ENCODE measurements at regions of chr14 and their contacts with region 1.

Region 1: GRCh38 chr14:58238252-58239243 is 6.1 kb upstream of the PSMA3 start:
- DNase-seq: peak in 1 of 2 donors; percentile 56
- H3K4me3 ChIP-seq: peak overlapping the region; percentile 52 to 64 (median 63)
- H3K27ac ChIP-seq: peak overlapping the region; percentile 87 to 92
- H3K4me1 ChIP-seq: no peaks in the 10 kb centered on the region
- H3K27me3 ChIP-seq: no peaks in the 10 kb centered on the region
- CTCF ChIP-seq: no peak
- POLR2A ChIP-seq: no peak

Region 2: GRCh38 chr14:57769863-57770523 is 468.6 kb before region 1 on chr14:
- intact Hi-C with region 1: no loop called
- DNase-seq: no peak
- H3K4me3 ChIP-seq: no peak overlapping the region
- H3K27ac ChIP-seq: no peak overlapping the region
- H3K4me1 ChIP-seq: no peaks in the 10 kb centered on the region
- H3K27me3 ChIP-seq: no peaks in the 10 kb centered on the region
- CTCF ChIP-seq: no peak
- POLR2A ChIP-seq: no peak

Region 3: DNA sequence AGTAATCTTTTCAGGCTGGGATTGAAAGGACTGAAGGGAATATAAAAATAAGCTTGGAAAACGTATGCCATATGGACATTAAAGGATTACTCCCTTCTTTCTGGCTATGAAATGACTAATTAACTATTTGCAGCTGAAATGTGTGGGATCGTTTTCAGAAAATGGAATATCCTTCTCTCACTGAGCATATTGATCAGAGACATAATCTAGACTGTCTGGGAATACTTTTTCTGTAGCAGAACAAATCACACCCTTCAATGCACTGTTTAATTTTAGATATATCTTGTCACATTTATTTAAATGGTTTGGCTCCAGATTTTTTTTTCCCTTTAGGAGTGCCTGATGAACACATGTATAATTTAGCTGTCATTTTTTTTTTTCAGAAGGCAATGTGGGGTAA is 49.4 kb before region 1 on chr14:
- intact Hi-C with region 1: no loop called
- DNase-seq: no peak
- H3K4me3 ChIP-seq: no peak overlapping the region
- H3K27ac ChIP-seq: no peak overlapping the region
- H3K4me1 ChIP-seq: no peaks in the 10 kb centered on the region
- H3K27me3 ChIP-seq: peaks cover 0 to 4% of the 10 kb centered on the region in 2 donors
- CTCF ChIP-seq: no peak
- POLR2A ChIP-seq: no peak

Region 4: GRCh38 chr14:58200846-58201245 is 37.7 kb before region 1 on chr14:
- intact Hi-C with region 1: loop called (anchors 2 kb)
- DNase-seq: no peak
- H3K4me3 ChIP-seq: peak overlapping the region; percentile 72 to 97 (median 91)
- H3K27ac ChIP-seq: peak overlapping the region; percentile 97 to 99
- H3K4me1 ChIP-seq: peaks cover 0 to 8% of the 10 kb centered on the region in 2 donors
- H3K27me3 ChIP-seq: no peaks in the 10 kb centered on the region
- CTCF ChIP-seq: no peak
- POLR2A ChIP-seq: no peak

Region 5: DNA sequence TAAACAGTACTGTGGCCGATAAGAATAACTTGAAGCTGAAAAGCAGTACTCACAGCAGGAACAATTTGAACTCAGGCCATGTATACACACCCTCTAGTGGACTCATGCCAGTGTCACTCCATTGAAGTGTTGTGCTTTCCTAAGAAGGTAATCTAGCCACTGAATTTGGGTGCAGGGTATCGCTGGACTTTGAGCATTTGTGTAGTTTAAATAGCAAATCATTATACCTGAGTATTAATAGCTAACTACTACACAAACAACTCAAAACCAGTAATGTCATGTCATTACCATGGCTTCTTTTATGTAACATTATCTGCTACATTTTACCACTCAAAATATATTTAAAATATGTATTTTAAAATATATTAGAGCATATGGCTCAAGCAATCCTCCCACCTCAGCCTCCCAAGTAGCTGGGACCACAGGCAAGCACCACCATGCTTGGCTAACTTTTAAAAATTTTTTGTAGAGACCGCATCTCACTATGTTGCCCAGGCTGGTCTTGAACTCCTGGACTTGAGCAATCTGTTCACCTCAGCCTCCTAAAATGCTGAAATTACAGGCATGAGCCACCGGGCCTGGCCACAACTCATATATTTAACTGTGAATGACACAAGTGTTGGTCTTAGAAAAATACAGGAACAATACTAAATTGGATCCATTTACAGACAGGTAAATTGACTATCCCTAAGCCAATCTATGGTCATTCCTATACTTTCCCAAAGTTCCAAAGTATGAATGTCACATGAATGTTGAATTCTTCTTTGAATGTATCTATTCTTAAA is 34.2 kb after region 1 on chr14:
- intact Hi-C with region 1: no loop called
- DNase-seq: no peak
- H3K4me3 ChIP-seq: no peak overlapping the region
- H3K27ac ChIP-seq: no peak overlapping the region
- H3K4me1 ChIP-seq: no peaks in the 10 kb centered on the region
- H3K27me3 ChIP-seq: no peaks in the 10 kb centered on the region
- CTCF ChIP-seq: no peak
- POLR2A ChIP-seq: no peak